Activated CD8-positive, alpha-beta T cell treated with anti-CD3 and anti-CD28 coated beads, Interleukin-2, amount 10 ng/mL, durations not matched to agents 7 days and 5 days (primary cell): ENCODE measurements at regions of chr7 and their contacts with region 1.

Region 1: DNA sequence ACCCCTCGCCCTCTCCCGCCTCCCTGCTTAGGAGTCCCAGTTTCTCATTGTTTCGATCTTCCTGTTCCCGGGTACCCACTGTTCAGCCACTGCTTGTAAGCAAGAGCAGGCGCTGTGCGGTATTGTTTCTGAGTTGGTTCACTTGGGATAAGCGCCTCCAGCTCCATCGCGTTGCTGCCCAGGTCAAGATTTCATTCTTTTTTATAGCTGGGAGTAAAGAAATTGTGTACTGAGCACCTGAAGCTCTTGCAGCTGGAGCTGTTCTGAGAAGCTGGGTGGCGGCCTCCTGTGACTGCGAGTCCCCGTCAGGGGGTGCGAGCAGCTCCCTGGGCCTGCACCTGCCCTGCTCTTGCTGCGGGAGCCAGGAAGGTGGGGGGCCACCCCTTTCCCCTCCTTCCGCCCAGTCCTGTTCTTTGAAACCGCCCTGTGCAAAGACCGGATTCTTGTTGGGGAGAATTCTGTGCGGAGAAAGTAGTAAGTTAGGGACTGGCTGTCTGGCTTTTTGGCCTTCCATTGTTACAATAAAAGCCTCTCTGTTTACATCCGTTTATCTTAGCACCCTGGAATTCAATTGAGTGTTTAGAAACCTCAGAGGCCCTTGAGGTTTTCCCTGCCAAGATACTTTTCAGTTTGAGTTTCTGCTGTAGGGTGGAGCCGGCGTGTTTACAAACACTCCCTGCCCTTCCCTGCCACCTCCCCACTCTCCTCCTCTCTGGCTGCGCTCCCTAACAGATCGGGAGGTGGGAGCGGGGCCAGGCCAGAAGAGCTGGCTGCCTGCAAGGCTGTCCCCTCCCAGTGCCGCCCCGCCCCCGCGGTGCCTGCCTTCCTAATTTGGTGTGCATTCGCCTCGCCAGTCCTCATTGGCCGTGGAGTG is 30.8 kb upstream of the AP5Z1 start:
- DNase-seq: peak; percentile 76
- ATAC-seq: peak; percentile 78
- H3K4me3 Mint-ChIP-seq: peak overlapping the region; percentile 82
- H3K27ac Mint-ChIP-seq: peak overlapping the region; percentile 95
- H3K4me1 Mint-ChIP-seq: peaks cover 60% of the 10 kb centered on the region
- H3K27me3 Mint-ChIP-seq: no peaks in the 10 kb centered on the region

Region 2: DNA sequence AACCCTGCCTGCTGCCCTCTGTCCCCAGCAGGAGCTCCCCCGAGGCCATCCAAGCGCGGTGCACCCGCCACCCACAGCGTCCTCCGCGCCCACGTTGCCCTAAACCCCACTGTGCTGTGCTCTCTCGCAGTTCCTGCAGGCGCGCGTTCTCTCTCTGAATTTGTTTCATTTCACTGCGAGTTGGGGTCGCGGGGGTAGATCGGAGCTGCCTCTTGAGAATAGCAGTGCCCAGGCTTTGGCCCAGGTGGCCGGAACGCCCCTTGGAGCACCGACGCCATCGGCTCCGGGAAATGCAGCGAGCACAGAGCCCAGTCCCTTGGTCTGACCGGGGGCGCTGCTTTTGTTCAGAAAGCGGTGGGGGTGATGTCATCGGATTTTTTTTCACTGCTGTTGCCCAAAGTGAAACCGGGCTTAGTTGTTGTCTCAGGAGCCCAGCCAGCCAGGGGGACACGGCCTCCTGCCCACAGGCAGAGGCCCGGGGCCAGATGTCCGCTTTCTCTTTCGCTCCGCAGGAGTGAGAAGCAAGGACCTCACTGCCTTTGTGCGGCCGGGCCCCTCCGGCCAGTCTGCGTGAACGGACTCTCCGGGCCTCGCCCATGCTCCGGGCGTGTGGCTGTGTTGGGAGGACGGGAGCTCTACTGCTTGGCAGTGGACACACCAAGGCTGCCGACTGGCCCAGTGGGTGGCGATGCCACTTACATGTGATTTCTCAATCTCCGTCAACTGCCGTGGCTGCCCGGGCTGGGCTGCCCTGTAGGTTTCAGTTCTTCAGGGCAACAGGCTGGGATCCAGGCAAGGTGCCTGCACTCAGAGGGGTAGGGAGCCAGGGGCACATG is 19.4 kb before region 1 on chr7:
- CTCF ChIA-PET with region 1: interaction called, 7 read pairs
- POLR2A ChIA-PET with region 1: interaction called, 14 read pairs
- DNase-seq: peak; percentile 83
- ATAC-seq: peak; percentile 86
- H3K4me3 Mint-ChIP-seq: peak overlapping the region; percentile 92
- H3K27ac Mint-ChIP-seq: peak overlapping the region; percentile 96
- H3K4me1 Mint-ChIP-seq: peaks cover 49% of the 10 kb centered on the region
- H3K27me3 Mint-ChIP-seq: no peaks in the 10 kb centered on the region

Region 3: GRCh38 chr7:4733936-4734528 is 10.6 kb before region 1 on chr7:
- CTCF ChIA-PET with region 1: interaction called, 13 read pairs
- POLR2A ChIA-PET with region 1: interaction called, 5 read pairs
- DNase-seq: peak; percentile 64
- ATAC-seq: peak; percentile 74
- H3K4me3 Mint-ChIP-seq: peak overlapping the region; percentile 53
- H3K27ac Mint-ChIP-seq: peak overlapping the region; percentile 83
- H3K4me1 Mint-ChIP-seq: peaks cover 71% of the 10 kb centered on the region
- H3K27me3 Mint-ChIP-seq: no peaks in the 10 kb centered on the region